ENCODE measurements at regions of chr20 and their contacts with region 1.

Region 1: DNA sequence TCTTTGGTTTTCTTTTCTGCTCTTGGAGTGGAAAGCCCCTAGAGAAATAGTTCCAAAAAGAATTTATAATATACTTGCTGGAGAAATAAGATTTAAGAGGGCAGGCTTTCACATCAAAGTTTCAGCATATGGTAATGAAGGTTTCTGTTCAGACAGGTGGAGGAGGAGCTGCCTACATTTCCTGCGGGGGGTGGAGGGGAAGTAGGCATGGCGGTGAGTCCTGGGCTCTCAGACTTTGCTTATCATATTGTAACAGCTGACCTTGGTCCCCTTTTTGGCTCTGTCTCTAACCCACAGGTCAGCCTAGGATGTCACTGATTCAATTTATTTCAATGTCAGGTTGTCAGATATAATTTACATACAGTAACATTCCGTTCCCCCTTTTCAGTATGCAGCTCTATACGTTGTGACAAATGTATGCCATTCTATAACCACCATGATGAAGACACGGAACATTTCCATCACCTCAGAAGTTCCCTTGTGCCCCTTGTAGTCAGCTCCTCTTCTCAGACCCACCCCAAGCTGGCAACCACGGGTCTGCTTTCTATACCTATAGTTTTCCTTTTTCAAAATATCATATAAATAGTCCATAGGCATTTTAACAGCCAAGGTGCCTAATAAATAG is 77.6 kb upstream of the GGTLC1 start:
- DNase-seq: no peak
- H3K4me3 ChIP-seq: no peak overlapping the region
- H3K27ac ChIP-seq: no peak overlapping the region
- H3K4me1 ChIP-seq: no peaks in the 10 kb centered on the region
- H3K27me3 ChIP-seq: no peaks in the 10 kb centered on the region
- CTCF ChIP-seq: no peak

Region 2: DNA sequence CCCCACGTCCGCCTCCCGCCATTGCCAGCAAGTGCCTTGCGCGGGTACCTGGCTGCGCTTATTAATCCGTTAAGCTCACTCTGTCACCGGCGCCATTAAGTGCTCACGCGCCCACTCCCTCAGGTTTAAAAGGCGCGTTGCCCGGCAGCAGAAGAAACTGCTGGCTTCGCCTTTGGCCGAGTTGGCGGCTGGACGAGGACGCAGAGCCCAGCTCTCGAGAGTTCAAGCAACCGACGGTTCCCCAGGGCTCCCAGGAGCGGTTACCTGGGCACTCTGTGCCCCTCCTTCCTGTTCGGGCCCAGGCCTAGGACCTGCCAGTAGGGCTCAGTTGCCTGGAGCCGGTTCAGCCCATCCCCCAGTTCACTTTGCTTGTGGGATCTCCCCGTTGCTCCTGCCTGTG is 77.6 kb before region 1 on chr20 and contains the start of gene GGTLC1:
- CTCF ChIA-PET with region 1: no interaction called
- dilution Hi-C with region 1: no loop called
- in situ Hi-C with region 1: no loop called
- intact Hi-C with region 1: no loop called
- DNase-seq: no peak
- H3K4me3 ChIP-seq: no peak within 1 kb of the TSS
- H3K27ac ChIP-seq: no peak within 1 kb of the TSS
- H3K4me1 ChIP-seq: no peaks in the 10 kb centered on the region
- H3K27me3 ChIP-seq: no peaks in the 10 kb centered on the region
- CTCF ChIP-seq: no peak
- total RNA-seq, gene GGTLC1: not detected

Region 3: DNA sequence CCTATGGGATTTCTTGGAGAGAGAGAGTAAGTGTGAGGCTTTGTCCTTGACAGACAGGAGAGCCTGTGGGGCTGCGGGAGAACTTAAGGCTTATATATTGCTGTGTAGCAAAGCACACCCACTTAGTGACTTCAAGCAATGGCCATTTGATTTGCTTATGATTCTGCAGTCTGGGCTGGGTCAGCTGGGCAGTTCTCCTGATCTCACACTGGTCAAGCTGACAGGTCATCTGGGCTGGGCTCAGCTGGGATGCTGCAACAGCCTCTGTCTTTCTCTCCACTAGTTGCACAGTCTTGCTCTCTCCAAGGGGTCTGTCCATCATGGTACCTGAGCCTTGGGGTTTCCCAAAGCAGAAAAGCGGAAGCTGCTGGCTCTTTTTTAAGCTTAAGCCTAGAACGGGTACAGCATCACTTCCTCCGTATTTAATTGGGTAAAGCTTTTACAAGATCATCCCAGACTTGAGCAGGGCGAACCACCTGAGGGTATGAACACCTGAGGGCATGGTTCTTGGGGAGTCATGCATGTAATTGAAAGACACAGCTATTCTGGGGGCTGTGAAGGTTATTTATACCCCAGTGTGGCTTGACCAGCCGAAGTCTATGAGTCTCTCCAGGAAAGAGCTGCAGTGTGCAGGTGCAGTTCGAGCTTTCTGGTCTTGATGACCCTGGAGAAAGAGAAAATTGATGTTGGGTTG is 64.3 kb before region 1 on chr20:
- CTCF ChIA-PET with region 1: no interaction called
- dilution Hi-C with region 1: no loop called
- in situ Hi-C with region 1: no loop called
- intact Hi-C with region 1: loop called (anchors 10 kb)
- DNase-seq: no peak
- H3K4me3 ChIP-seq: no peak overlapping the region
- H3K27ac ChIP-seq: no peak overlapping the region
- H3K4me1 ChIP-seq: no peaks in the 10 kb centered on the region
- H3K27me3 ChIP-seq: no peaks in the 10 kb centered on the region
- CTCF ChIP-seq: no peak

Measured in mammary epithelial cell (primary cell).